ENCODE measurements at regions of chr16 and their contacts with region 1.

Region 1: DNA sequence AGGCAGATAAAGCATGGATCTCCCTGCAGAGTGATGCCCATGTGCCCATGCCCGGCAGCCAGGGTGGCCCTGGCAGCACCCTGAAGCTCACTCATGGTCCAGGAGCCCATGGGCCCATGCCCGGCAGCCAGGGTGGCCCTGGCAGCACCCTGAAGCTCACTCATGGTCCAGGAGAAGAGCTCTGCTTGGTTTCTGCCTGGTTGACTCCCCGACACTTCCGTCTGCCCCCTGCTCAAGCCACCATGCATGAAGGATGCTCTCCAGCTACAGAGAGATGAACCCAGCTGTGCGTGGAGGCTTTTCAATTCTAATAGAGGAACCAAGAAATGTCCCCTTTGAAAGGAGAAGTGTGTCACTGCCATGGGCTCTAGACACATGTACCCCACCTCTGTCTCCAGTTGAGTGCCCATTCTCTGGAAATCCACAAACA is 8.7 kb downstream of the CCL17 start:
- DNase-seq: no peak
- H3K4me3 ChIP-seq: no peak overlapping the region
- H3K27ac ChIP-seq: no peak overlapping the region
- H3K4me1 ChIP-seq: peaks cover 3 to 16% of the 10 kb centered on the region in 2 donors
- H3K27me3 ChIP-seq: no peaks in the 10 kb centered on the region
- CTCF ChIP-seq: no peak
- POLR2A ChIP-seq: no peak

Region 2: GRCh38 chr16:56884026-56884582 is 529.2 kb before region 1 on chr16:
- intact Hi-C with region 1: no loop called
- DNase-seq: no peak
- H3K4me3 ChIP-seq: no peak overlapping the region
- H3K27ac ChIP-seq: no peak overlapping the region
- H3K4me1 ChIP-seq: no peaks in the 10 kb centered on the region
- H3K27me3 ChIP-seq: no peaks in the 10 kb centered on the region
- CTCF ChIP-seq: no peak
- POLR2A ChIP-seq: no peak

Region 3: GRCh38 chr16:57084257-57084770 is 329.0 kb before region 1 on chr16:
- intact Hi-C with region 1: loop called (anchors 10 kb)
- DNase-seq: peak; percentile 63 to 70
- H3K4me3 ChIP-seq: no peak overlapping the region
- H3K27ac ChIP-seq: peak overlapping the region in 1 of 3 donors; percentile 33
- H3K4me1 ChIP-seq: peaks cover 0 to 12% of the 10 kb centered on the region in 2 donors
- H3K27me3 ChIP-seq: no peaks in the 10 kb centered on the region
- CTCF ChIP-seq: peak; percentile 92 to 100 (median 97)
- POLR2A ChIP-seq: no peak

Region 4: DNA sequence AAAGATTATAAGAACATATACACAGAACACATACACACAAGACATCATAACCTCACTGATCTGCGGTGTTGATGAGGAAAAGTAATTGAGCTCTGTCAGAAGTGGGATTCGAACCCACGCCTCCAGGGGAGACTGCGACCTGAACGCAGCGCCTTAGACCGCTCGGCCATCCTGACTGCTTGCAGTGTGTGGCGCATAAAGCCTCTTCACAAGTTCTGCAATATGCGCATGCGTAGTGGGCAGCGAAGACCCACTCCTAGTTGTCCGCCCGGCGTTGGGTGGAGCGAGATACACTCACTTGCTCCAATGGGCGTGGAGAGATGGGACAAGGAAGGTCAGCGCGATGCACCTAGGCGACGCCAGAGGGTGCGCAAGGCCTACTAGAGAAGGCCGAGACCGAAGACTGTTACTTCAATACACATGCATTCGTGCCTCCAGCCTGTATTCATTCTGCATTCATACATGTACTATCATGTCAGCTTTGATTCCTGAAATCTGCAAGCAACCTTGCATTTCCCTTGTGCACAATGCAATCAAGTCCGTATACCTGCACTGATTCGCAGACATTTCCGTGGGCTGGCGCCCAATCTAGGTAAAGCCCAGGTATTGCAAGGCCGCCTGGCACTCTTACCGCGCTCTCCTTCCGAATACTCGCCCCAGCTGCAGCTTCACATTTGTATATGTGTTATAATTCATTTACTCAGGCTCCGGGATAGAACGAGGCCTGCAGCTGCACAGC is 112.8 kb before region 1 on chr16:
- intact Hi-C with region 1: loop called (anchors 2 kb)
- DNase-seq: peak; percentile 100
- H3K4me3 ChIP-seq: peak overlapping the region in 2 of 3 donors; percentile 3 to 26
- H3K27ac ChIP-seq: peak overlapping the region; percentile 86 to 90 (median 89)
- H3K4me1 ChIP-seq: peaks cover 9 to 37% of the 10 kb centered on the region in 2 donors
- H3K27me3 ChIP-seq: no peaks in the 10 kb centered on the region
- CTCF ChIP-seq: peak; percentile 75 to 100 (median 96)
- POLR2A ChIP-seq: no peak

Region 5: GRCh38 chr16:57349212-57350031 is 63.9 kb before region 1 on chr16:
- intact Hi-C with region 1: no loop called
- DNase-seq: no peak
- H3K4me3 ChIP-seq: no peak overlapping the region
- H3K27ac ChIP-seq: no peak overlapping the region
- H3K4me1 ChIP-seq: no peaks in the 10 kb centered on the region
- H3K27me3 ChIP-seq: no peaks in the 10 kb centered on the region
- CTCF ChIP-seq: no peak
- POLR2A ChIP-seq: no peak

Region 6: DNA sequence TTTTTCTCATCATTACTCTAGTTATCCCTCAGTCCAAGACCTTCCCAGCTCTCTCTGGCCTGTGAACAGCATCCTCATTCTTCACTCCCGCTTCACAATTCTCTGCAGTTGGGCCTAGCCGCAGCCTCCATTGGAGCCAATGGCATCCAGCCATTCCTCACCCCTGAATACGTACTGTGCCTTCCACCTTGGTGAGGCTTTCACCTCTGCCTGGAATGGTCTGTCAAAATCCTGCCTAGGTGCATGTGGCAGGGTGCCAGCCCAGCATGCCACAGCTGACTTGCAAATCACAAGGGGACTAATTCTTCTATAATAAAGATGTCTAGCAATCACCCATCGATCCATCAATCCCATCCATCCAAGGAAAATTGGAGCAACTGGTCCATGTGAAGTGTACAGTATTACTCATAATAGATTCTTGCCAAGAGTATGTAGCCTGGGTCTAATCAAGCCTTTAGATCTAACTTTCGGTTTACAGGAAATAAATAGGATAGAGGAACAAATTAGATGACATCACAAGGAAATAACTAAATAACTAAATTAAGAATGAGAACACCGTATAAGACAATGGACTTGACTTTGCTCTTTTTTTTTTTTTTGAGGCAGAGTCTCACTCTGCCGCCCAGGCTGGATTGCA is 46.1 kb before region 1 on chr16:
- intact Hi-C with region 1: no loop called
- DNase-seq: peak in 1 of 2 donors; percentile 40
- H3K4me3 ChIP-seq: no peak overlapping the region
- H3K27ac ChIP-seq: no peak overlapping the region
- H3K4me1 ChIP-seq: peaks cover 0 to 15% of the 10 kb centered on the region in 2 donors
- H3K27me3 ChIP-seq: no peaks in the 10 kb centered on the region
- CTCF ChIP-seq: no peak
- POLR2A ChIP-seq: no peak

Region 7: DNA sequence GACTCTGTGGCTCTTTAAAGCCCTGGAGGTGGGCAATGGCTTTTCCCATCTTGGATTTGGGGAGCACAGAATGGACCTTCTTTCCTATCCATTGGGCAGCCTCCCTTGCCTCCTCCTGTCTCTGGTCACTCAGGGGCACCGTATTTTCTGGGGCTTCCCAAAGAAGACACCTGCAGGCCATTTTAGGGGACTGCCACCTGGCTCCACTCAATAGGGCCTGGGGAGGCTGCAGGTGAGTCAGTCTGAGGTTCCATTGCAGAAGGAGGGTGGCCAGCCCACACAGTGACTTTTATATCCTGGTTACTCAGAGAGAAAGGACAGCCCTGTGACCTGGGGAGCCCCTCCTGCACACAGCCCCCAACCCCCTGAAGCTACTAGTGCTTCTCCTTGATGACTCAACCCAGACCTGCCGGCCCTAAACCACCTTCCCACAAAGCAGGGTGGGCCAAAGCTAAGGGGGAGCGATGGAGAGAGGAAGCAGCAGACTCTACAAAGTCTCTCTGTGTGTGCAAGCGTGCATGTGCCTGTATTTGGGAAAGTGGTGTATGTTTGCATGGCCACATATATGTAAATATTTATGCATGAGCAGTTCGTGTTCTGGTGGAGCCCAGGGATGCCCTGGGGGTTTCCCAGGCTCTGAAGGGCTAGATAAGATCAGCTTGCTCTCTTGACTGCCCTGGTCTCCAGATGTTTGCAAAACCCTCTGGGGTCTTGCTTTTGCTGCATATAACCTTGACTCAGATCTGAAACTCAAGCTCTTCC is 36.1 kb before region 1 on chr16:
- intact Hi-C with region 1: loop called (anchors 5 kb)
- DNase-seq: no peak
- H3K4me3 ChIP-seq: no peak overlapping the region
- H3K27ac ChIP-seq: peak overlapping the region in 1 of 3 donors; percentile 6
- H3K4me1 ChIP-seq: peaks cover 5 to 45% of the 10 kb centered on the region in 2 donors
- H3K27me3 ChIP-seq: no peaks in the 10 kb centered on the region
- CTCF ChIP-seq: no peak
- POLR2A ChIP-seq: no peak

Region 8: GRCh38 chr16:57519796-57520360 is 106.6 kb after region 1 on chr16:
- intact Hi-C with region 1: loop called (anchors 5 kb)
- DNase-seq: peak; percentile 77 to 79
- H3K4me3 ChIP-seq: no peak overlapping the region
- H3K27ac ChIP-seq: no peak overlapping the region
- H3K4me1 ChIP-seq: no peaks in the 10 kb centered on the region
- H3K27me3 ChIP-seq: no peaks in the 10 kb centered on the region
- CTCF ChIP-seq: peak; percentile 81 to 99 (median 90)
- POLR2A ChIP-seq: no peak

Region 9: DNA sequence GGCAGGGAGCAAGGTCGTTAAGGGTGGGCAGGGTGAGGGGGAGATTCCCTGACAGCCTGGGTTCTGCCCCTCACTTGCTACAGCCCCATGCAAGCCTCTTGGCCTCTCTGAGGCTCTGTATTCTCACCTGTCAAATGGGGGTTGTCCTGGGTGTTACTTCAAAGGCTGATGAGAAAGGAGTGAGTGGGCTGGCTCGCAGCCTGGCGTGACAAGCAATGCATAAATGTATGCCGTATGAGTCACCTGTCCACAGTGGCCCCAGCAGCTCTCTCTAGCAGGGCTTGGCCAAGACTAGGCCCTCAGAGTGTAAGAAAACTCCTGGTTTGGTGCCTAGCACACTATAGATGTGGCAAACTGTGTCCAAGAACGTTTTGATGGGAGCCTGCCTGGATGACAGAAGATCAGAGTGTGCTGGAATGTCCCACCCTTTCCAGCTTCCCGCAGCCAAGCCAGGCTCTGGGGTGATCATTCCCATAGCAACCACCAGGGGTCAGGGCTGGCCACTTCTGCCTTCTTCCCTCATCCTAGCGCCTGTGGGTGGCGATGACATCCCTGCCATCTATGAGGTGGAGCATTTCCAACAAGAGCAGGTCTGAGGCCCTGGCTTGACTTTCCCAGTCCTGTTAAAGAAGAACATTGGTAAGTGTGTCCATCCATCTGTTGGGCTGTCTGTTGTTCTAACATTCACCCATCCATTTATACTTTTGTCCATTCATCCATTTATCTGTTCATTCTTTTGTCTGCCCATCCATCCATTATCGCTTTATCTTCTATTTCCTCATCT is 178.0 kb after region 1 on chr16:
- intact Hi-C with region 1: no loop called
- DNase-seq: peak; percentile 79 to 81
- H3K4me3 ChIP-seq: no peak overlapping the region
- H3K27ac ChIP-seq: peak overlapping the region in 1 of 3 donors; percentile 34
- H3K4me1 ChIP-seq: no peaks in the 10 kb centered on the region
- H3K27me3 ChIP-seq: no peaks in the 10 kb centered on the region
- CTCF ChIP-seq: peak; percentile 76 to 98 (median 90)
- POLR2A ChIP-seq: no peak

Measured in thyroid gland (tissue), 4 donors.